ENCODE measurements at regions of chr11 and their contacts with region 1.

Region 1: DNA sequence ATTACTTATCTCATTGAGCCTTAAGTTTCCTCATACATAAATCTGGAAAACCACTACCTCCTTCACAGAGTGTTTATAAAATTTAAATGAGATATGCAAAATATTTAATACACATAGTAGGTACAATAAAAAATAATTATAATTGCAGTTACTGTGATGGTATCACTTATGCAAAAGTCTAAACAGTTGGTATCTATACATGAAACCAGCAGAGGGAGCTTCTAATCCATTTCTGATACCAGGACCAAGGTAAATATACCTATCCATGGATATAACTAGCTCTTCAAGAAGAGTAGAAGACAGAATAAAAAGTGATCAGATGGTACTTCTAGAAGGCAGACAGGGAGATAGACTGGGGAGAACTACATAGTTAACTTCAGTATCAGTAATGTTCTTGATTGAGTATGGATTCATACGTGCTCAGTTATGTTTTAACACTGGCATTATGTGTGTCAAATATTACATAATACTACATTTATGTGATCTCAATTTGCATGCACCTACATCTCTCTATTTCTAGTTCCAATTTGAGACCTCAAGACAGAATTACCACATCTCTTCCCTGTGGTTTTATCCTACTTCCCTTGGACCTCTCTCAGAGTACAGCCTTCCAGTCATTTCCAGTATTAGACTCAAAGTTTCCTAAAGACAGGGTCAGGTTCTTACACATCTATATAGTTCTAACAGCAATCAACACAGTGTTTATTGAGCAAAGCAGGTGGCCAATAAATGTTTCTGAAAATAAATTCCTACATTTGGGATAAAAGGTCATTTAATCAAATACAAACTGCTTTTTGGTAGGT is 13.7 kb upstream of the TSG101 start:
- DNase-seq: no peak
- ATAC-seq: peak; percentile 55
- H3K4me3 Mint-ChIP-seq: no peak overlapping the region
- H3K27ac Mint-ChIP-seq: no peak overlapping the region
- H3K4me1 Mint-ChIP-seq: no peaks in the 10 kb centered on the region
- H3K27me3 Mint-ChIP-seq: no peaks in the 10 kb centered on the region

Region 2: GRCh38 chr11:18438691-18439090 is 101.7 kb before region 1 on chr11:
- CTCF ChIA-PET with region 1: no interaction called
- DNase-seq: no peak
- ATAC-seq: no peak
- H3K4me3 Mint-ChIP-seq: no peak overlapping the region
- H3K27ac Mint-ChIP-seq: no peak overlapping the region
- H3K4me1 Mint-ChIP-seq: no peaks in the 10 kb centered on the region
- H3K27me3 Mint-ChIP-seq: no peaks in the 10 kb centered on the region

Region 3: GRCh38 chr11:18578975-18579598 is 38.7 kb after region 1 on chr11:
- CTCF ChIA-PET with region 1: interaction called, 11 read pairs
- DNase-seq: peak; percentile 52
- ATAC-seq: peak; percentile 93
- H3K4me3 Mint-ChIP-seq: peak overlapping the region; percentile 64
- H3K27ac Mint-ChIP-seq: peak overlapping the region; percentile 83
- H3K4me1 Mint-ChIP-seq: peaks cover 36% of the 10 kb centered on the region
- H3K27me3 Mint-ChIP-seq: no peaks in the 10 kb centered on the region

Region 4: GRCh38 chr11:18634140-18635032 is 94.0 kb after region 1 on chr11 and contains the start of gene SPTY2D1:
- CTCF ChIA-PET with region 1: interaction called, 14 read pairs
- DNase-seq: peak; percentile 100
- ATAC-seq: peak; percentile 91
- H3K4me3 Mint-ChIP-seq: peak within 1 kb of the TSS; percentile 97
- H3K27ac Mint-ChIP-seq: peak within 1 kb of the TSS; percentile 99
- H3K4me1 Mint-ChIP-seq: peaks cover 23% of the 10 kb centered on the region
- H3K27me3 Mint-ChIP-seq: no peaks in the 10 kb centered on the region
- total RNA-seq, gene SPTY2D1: 23.8 to 34.7 TPM

Region 5: GRCh38 chr11:18650859-18651557 is 110.6 kb after region 1 on chr11:
- CTCF ChIA-PET with region 1: interaction called, 44 read pairs
- DNase-seq: peak; percentile 67
- ATAC-seq: peak; percentile 83
- H3K4me3 Mint-ChIP-seq: no peak overlapping the region
- H3K27ac Mint-ChIP-seq: peak overlapping the region; percentile 65
- H3K4me1 Mint-ChIP-seq: peaks cover 12% of the 10 kb centered on the region
- H3K27me3 Mint-ChIP-seq: no peaks in the 10 kb centered on the region

Region 6: DNA sequence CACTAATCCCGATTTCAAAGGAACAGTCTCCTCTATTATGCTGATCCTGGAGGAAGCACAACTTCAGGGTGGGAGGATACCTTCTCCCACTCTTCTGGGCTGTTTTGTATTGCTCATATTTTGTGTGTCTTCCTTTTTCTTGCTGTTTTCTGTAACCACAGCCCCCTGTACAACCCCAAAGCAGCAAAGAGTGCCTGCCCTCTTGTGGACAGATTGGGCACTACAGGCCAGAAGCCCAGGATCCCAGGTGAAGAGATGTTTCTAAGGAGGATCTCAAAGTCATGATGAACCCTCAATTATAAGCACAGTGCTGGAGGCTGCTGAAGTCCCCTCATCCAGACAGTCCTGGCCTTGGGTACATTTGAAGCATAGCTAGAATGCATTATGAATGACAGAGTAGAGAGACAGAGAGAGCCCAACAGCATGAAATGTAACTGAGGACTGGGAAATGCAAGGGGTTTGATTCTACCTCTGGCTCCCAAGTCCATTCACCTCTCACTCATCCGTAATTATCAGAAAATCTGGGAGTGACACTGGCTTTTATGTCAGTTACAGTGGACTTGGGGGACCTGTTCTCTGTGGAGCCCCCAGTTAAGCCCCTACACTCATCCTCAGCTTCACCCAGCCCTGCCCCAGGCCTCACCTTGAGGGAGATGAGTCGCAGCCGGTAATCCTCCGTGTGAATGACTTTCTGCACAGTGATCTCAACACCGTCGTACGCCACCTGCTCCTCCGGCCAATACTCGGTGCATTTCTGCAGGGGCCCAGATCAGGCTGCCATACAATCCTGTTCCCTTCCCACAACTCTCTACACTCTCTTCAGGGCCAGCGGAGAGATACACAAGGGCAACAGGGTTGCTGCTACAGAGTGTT is 191.8 kb after region 1 on chr11:
- CTCF ChIA-PET with region 1: interaction called, 22 read pairs
- DNase-seq: peak; percentile 72
- ATAC-seq: peak; percentile 77
- H3K4me3 Mint-ChIP-seq: no peak overlapping the region
- H3K27ac Mint-ChIP-seq: no peak overlapping the region
- H3K4me1 Mint-ChIP-seq: peaks cover 5% of the 10 kb centered on the region
- H3K27me3 Mint-ChIP-seq: no peaks in the 10 kb centered on the region

Region 7: DNA sequence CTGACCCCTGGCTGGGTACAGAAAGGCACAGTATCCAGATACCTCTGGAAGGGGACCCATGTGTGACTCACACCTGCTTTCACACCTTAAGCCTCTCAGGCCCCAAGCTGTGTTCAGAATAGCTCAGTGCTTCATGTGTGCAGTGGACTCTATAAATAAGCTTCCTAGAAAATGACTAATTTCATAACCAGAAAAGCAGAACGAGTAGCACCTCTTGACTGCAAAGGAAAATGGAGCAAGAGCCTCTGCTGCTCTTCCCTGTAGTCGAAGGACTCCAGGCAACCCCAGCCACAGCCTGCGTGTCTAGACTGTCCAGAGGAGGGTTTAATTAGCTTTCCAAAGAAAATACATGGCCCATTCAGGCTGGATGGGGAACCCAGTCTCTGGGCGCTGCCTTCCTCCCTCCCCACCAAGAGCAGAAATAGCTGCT is 228.1 kb after region 1 on chr11:
- CTCF ChIA-PET with region 1: interaction called, 11 read pairs
- DNase-seq: peak; percentile 66
- ATAC-seq: peak; percentile 75
- H3K4me3 Mint-ChIP-seq: no peak overlapping the region
- H3K27ac Mint-ChIP-seq: peak overlapping the region; percentile 51
- H3K4me1 Mint-ChIP-seq: peaks cover 42% of the 10 kb centered on the region
- H3K27me3 Mint-ChIP-seq: peaks cover 13% of the 10 kb centered on the region

Measured in activated CD8-positive, alpha-beta memory T cell treated with anti-CD3 and anti-CD28 coated beads, Interleukin-2, amount 10 ng/mL, durations not matched to agents 7 days and 5 days (primary cell).